ENCODE measurements at regions of chr13 and their contacts with region 1.

Region 1: DNA sequence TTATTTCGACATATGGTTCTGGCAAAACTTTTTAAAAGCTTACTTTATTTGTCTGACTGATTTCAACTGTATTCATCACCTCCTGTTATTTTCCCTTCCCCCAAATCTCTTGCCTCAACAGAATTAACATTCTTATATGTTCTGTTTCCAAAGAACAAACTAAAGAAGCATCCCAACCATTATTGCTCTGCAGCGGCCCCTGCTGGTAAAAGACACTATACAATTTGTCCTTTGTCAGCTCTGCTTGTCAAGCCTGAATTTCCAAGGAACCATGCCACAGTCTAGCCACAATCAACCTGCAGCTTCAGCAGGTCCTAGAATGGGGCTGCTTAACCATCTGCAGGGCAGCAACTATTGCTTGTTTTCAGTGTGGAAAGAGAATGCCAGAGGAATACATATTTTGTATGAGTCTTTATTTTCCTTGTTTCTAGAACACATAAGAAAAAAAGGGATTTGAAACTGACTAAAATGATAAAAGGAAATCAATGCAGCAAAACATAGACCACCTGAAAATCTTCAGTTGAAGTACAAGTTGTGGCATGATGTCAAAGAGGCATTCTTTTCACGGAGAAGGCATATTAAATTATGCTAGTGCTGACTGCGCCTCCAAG is 845.3 kb downstream of the DIAPH3 start:
- DNase-seq: peak; percentile 86
- H3K4me3 Mint-ChIP-seq: no peak overlapping the region
- H3K27ac Mint-ChIP-seq: no peak overlapping the region
- H3K4me1 Mint-ChIP-seq: no peaks in the 10 kb centered on the region
- H3K27me3 Mint-ChIP-seq: peaks cover 77% of the 10 kb centered on the region
- CTCF ChIP-seq: peak; percentile 72

Region 2: DNA sequence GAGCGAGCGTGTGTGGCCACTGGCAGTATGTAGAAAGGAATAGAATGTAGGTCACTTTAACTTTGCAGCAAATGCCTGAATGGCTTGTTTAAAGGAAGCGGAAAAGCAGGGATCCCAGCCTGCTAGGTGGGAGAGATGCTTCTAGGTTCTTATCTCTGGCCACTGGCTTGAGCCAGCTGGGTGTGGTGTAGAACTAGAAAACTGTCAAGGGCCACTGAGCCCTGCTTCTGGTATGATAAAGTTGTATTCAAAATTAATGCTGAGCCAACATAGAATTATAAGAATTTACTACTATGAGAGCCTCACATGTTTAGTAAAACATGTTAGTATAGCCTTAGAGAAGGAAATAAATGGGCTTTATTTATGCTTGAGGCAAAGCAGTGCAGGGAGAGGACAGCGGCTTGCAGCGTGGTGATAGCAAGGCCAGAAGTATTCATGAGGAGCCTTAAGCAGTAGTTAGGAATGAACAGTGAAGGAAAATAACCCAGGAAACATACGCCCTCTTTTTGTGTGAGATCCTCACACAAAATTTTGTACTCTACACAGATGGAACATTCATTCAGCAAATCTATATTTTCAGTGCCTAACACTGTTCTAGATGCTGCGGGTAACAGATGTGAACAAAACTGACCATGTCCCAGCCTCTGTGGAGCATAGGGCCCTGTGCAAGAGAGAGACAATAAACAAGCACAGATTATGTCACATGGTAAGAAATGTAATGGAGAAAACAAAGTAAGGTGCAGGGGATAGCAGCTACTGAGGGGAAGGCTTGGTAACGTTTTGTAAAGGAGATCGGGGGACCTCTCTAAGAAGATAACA is 17.9 kb before region 1 on chr13:
- CTCF ChIA-PET with region 1: interaction called, 10 read pairs
- POLR2A ChIA-PET with region 1: no interaction called
- intact Hi-C with region 1: no loop called
- DNase-seq: no peak
- H3K4me3 Mint-ChIP-seq: no peak overlapping the region
- H3K27ac Mint-ChIP-seq: no peak overlapping the region
- H3K4me1 Mint-ChIP-seq: no peaks in the 10 kb centered on the region
- H3K27me3 Mint-ChIP-seq: peaks cover 41% of the 10 kb centered on the region
- CTCF ChIP-seq: no peak

Region 3: GRCh38 chr13:59337070-59337469 is 18.6 kb after region 1 on chr13:
- CTCF ChIA-PET with region 1: no interaction called
- POLR2A ChIA-PET with region 1: no interaction called
- intact Hi-C with region 1: no loop called
- DNase-seq: no peak
- H3K4me3 Mint-ChIP-seq: no peak overlapping the region
- H3K27ac Mint-ChIP-seq: no peak overlapping the region
- H3K4me1 Mint-ChIP-seq: no peaks in the 10 kb centered on the region
- H3K27me3 Mint-ChIP-seq: peaks cover 88% of the 10 kb centered on the region
- CTCF ChIP-seq: no peak